WTC11 (cell line): ENCODE measurements at regions of chr6 and their contacts with region 1.

Region 1: DNA sequence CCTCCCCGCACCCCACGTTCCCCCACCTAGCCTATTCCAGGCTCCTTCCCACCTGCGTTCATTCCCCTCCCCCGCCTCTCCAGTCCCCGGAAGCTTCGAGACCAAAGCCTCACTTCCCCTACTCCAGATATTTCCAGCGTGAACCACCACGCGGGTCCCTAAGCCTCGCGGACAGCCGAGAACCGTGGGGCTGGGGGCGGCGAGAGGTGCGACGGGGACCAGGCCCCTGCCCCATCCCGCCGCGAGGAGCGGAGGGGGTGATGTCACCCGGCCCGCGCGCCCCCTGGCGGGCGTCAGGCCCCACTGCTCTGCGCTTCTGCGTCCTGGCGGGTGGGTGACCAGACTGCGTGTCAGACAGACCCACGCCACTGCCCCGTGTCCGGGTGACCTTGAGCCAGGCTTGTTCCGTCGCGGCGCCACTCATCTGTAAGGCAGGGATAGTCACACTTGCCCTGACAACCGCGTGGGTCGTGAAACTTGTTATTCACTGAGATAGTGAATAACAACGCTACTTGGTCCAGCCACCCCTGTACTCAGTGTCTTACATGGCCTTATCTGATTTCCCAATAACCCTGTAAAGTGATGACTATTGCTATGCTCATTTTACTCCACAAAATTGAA is 9.0 kb upstream of the HSP90AB1 start:
- DNase-seq: peak; percentile 77
- ATAC-seq: peak; percentile 56
- H3K4me3 Mint-ChIP-seq: peak overlapping the region; percentile 78
- H3K27ac Mint-ChIP-seq: peak overlapping the region; percentile 74; the same call in 1 of the 2 replicates
- H3K4me1 Mint-ChIP-seq: peaks cover 44% of the 10 kb centered on the region
- H3K27me3 Mint-ChIP-seq: peaks cover 30% of the 10 kb centered on the region
- CTCF ChIP-seq: peak; percentile 90

Region 2: DNA sequence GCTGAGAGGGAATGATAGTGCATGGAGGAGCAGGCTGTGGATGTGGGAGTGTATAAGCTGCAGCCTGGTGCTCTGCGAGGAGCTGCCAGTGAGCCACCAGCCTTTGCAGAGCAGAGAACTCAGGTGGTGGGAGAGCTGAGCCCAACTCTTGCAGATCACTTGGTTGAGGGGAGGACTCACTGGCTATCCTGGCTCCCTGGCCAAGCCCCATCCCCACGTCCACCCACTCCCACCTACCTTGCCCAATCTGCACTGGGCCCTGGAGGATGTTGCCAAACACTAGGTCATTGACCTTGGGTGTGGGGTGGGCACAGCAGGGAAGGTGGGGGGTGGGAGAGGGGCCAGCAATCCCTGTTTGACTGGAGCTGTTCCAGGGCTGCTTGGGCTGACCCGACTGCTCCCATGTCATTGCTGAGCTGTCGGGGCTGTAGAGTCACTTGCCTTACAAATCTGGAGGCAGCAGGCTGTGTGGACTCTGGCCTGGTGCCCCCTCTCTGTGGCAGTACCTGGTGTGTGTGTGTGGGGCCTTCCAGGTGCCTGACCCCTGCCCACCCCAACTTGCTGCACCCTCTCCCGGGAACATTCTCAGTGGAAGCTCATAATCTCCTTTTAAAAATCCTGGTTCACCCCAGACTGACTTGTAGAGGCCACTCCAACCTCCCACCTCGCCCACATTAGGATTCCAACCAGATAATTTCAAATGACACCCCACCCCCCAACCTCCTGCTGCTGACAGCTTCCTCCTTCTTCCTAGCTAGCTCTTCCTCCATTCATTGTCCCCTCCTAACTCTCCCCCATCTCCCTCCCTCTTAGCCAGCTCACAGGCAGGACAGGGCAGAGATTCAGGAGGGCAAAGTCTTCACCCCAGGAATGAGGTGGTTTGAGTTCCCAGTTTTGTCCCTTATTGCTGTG is 273.0 kb before region 1 on chr6:
- CTCF ChIA-PET with region 1: no interaction called
- POLR2A ChIA-PET with region 1: no interaction called
- DNase-seq: no peak
- ATAC-seq: peak; percentile 25; the same call in 1 of the 2 replicates
- H3K4me3 Mint-ChIP-seq: no peak overlapping the region
- H3K27ac Mint-ChIP-seq: no peak overlapping the region
- H3K4me1 Mint-ChIP-seq: peaks cover 21% of the 10 kb centered on the region
- H3K27me3 Mint-ChIP-seq: no peaks in the 10 kb centered on the region
- CTCF ChIP-seq: no peak

Region 3: GRCh38 chr6:44096612-44097011 is 141.3 kb before region 1 on chr6:
- CTCF ChIA-PET with region 1: interaction called, 18 read pairs
- POLR2A ChIA-PET with region 1: no interaction called
- DNase-seq: peak; percentile 71
- ATAC-seq: peak; percentile 78
- H3K4me3 Mint-ChIP-seq: no peak overlapping the region
- H3K27ac Mint-ChIP-seq: no peak overlapping the region
- H3K4me1 Mint-ChIP-seq: no peaks in the 10 kb centered on the region
- H3K27me3 Mint-ChIP-seq: no peaks in the 10 kb centered on the region
- CTCF ChIP-seq: 0 out of 2 replicates have a peak, but pooled peaks have one; percentile 26

Region 4: GRCh38 chr6:44172731-44173500 is 65.0 kb before region 1 on chr6:
- CTCF ChIA-PET with region 1: interaction called, 43 read pairs
- POLR2A ChIA-PET with region 1: no interaction called
- DNase-seq: peak; percentile 88
- ATAC-seq: peak; percentile 90
- H3K4me3 Mint-ChIP-seq: no peak overlapping the region
- H3K27ac Mint-ChIP-seq: no peak overlapping the region
- H3K4me1 Mint-ChIP-seq: peaks cover 10% of the 10 kb centered on the region
- H3K27me3 Mint-ChIP-seq: peaks cover 5% of the 10 kb centered on the region; the same call in 1 of the 2 replicates
- CTCF ChIP-seq: peak; percentile 88

Region 5: GRCh38 chr6:44192428-44193041 is 45.4 kb before region 1 on chr6:
- CTCF ChIA-PET with region 1: interaction called, 13 read pairs
- POLR2A ChIA-PET with region 1: interaction called, 3 read pairs
- DNase-seq: no peak
- ATAC-seq: peak; percentile 93
- H3K4me3 Mint-ChIP-seq: peak overlapping the region; percentile 32
- H3K27ac Mint-ChIP-seq: peak overlapping the region; percentile 68
- H3K4me1 Mint-ChIP-seq: peaks cover 17% of the 10 kb centered on the region
- H3K27me3 Mint-ChIP-seq: no peaks in the 10 kb centered on the region
- CTCF ChIP-seq: no peak

Region 6: DNA sequence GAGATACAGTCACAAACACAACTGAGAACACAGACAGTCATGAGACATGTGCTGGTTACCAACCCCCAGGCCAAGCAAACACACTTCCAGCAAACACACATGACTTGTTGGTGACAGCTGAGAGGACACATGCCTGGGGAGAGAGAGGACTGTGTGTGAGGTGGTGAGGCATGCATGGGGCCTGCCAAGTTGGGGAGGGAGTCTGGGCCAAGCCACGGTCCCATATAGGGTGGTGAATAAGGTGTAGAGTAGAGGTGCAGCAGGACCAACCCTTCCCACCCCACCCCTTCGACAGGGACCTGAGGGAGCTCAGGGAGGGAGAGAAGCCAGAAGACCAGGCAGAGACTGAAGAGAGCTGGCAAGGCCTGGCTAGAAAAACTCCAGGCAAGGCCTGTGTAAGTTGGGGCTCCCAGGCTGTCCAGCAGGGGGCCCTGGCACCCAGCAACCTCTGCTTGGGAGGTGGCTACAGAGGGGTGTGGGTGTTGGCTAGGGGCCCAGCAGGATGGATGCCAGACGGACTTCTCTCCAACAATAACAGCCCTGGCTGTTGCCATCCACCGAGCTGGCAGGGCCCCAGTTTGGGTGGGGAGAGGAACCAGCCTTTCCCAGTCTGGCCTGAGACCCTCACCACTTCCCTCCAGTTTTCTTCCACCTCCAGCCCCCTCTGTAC is 16.5 kb before region 1 on chr6:
- CTCF ChIA-PET with region 1: interaction called, 174 read pairs
- POLR2A ChIA-PET with region 1: interaction called, 6 read pairs
- DNase-seq: peak; percentile 70
- ATAC-seq: peak; percentile 5
- H3K4me3 Mint-ChIP-seq: no peak overlapping the region; the same call in none of the 2 replicates
- H3K27ac Mint-ChIP-seq: peak overlapping the region; percentile 95
- H3K4me1 Mint-ChIP-seq: peaks cover 69% of the 10 kb centered on the region
- H3K27me3 Mint-ChIP-seq: no peaks in the 10 kb centered on the region
- CTCF ChIP-seq: peak; percentile 45; the same call in 1 of the 2 replicates

Region 7: GRCh38 chr6:44312901-44313788 is 75.2 kb after region 1 on chr6 and contains the start of gene AARS2:
- CTCF ChIA-PET with region 1: interaction called, 10 read pairs
- POLR2A ChIA-PET with region 1: interaction called, 4 read pairs
- DNase-seq: peak; percentile 97
- ATAC-seq: peak; percentile 90
- H3K4me3 Mint-ChIP-seq: peak within 1 kb of the TSS; percentile 99
- H3K27ac Mint-ChIP-seq: peak within 1 kb of the TSS; percentile 95
- H3K4me1 Mint-ChIP-seq: peaks cover 8% of the 10 kb centered on the region
- H3K27me3 Mint-ChIP-seq: no peaks in the 10 kb centered on the region
- CTCF ChIP-seq: peak; percentile 90
- total RNA-seq, gene AARS2: 26.8 to 29.7 TPM (median 28.9 TPM) in 3 replicates